OCI-LY7 (cell line): ENCODE measurements at regions of chr11 and their contacts with region 1.

Region 1: DNA sequence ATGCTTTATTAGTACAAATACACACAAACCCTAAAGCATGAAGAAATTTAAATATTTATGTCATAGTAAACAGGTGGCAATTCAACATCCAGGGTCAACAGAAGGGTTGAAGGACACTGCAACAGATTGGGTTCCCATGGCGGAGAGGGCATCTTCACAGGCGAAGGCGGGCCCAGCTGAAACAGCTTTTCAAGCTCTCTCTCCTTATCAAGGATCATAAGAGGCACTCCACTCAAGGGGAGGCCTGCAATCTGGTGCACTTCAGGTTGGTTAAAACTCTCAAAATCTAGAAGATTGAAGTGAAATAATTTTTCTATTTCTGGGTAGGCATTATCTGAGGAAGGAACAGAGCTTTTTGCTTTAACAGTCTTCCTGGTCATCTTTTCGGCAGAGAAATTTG is 16.8 kb upstream of the SLC22A8 start:
- DNase-seq: no peak
- H3K4me3 ChIP-seq: no peak overlapping the region
- H3K27ac ChIP-seq: no peak overlapping the region
- H3K4me1 ChIP-seq: no peaks in the 10 kb centered on the region
- CTCF ChIP-seq: no peak

Region 2: DNA sequence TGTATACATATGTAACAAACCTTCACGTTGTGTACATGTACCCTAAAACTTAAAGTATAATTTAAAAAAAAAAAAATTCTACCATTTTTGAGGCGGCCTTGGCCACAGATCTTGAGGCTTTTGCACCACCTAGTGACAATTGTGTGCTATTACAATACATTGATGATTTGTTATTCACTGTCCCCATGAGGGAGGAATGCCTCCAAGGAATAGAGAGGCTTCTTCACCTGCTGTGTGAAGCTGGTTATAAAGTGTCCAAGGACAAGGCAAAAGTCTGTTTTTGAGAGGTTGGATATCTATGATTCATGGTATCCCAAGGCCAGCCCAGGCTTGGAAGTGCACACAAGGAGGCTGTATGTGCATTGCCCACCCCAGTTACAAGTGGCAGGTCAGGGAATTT is 180.3 kb after region 1 on chr11:
- CTCF ChIA-PET with region 1: no interaction called
- POLR2A ChIA-PET with region 1: no interaction called
- intact Hi-C with region 1: loop called (anchors 2 kb)
- DNase-seq: peak; percentile 22
- H3K4me3 ChIP-seq: no peak overlapping the region
- H3K27ac ChIP-seq: no peak overlapping the region
- H3K4me1 ChIP-seq: no peaks in the 10 kb centered on the region
- CTCF ChIP-seq: peak; percentile 77